Mammary epithelial cell (primary cell): ENCODE measurements at regions of chr15 and their contacts with region 1.

Region 1: DNA sequence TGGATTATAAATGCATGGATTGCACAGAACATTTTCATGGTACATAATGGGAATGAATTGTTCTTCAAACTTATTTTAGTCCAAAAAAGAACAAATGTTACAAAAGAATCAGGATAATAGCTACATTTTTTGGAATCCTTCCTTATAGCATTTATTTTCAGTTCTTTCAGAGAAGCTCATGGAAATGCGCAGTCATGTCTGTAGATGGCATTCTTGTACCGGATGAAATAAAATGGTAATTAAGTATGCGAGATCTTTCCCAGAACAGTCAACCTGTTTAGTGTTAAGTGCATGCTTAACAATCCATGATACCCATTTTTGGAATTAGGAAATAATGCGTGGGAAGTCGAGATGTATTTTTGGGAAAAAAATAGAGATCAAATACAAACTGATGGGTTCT is 38.2 kb upstream of the GOLGA8B start:
- DNase-seq: peak; percentile 20
- H3K4me3 ChIP-seq: no peak overlapping the region
- H3K27ac ChIP-seq: no peak overlapping the region
- H3K4me1 ChIP-seq: no peaks in the 10 kb centered on the region
- H3K27me3 ChIP-seq: no peaks in the 10 kb centered on the region
- CTCF ChIP-seq: peak; percentile 40 to 58

Region 2: GRCh38 chr15:34271493-34271892 is 350.2 kb before region 1 on chr15:
- CTCF ChIA-PET with region 1: no interaction called
- dilution Hi-C with region 1: no loop called
- in situ Hi-C with region 1: no loop called
- intact Hi-C with region 1: no loop called
- DNase-seq: peak; percentile 90
- H3K4me3 ChIP-seq: no peak overlapping the region
- H3K27ac ChIP-seq: no peak overlapping the region
- H3K4me1 ChIP-seq: peaks cover 3% of the 10 kb centered on the region
- H3K27me3 ChIP-seq: no peaks in the 10 kb centered on the region
- CTCF ChIP-seq: no peak

Region 3: GRCh38 chr15:34708422-34708821 is 86.7 kb after region 1 on chr15:
- CTCF ChIA-PET with region 1: interaction called, 12 read pairs
- dilution Hi-C with region 1: no loop called
- in situ Hi-C with region 1: no loop called
- intact Hi-C with region 1: loop called (anchors 5 kb)
- DNase-seq: peak; percentile 42
- H3K4me3 ChIP-seq: no peak overlapping the region
- H3K27ac ChIP-seq: no peak overlapping the region
- H3K4me1 ChIP-seq: no peaks in the 10 kb centered on the region
- H3K27me3 ChIP-seq: no peaks in the 10 kb centered on the region
- CTCF ChIP-seq: peak; percentile 94 to 95

Region 4: DNA sequence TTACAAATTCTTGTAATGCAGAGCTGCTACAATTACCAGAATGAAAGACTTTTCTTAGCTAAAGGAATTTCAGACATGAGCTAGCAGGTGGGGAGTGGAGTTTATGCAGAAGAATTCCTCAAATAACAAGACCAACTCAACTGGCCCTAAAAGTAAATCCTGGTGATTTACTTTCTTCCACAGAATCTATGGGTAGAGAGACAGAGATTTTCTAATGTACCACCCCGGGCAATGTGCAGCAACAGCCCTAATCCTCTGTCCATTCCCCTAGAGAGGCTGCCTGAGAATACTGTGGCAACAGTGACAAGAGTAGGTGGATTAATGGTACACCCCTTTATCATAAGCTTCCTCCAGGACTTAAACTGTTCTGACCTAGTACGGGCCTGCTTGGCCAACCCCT is 292.6 kb after region 1 on chr15:
- CTCF ChIA-PET with region 1: no interaction called
- dilution Hi-C with region 1: no loop called
- in situ Hi-C with region 1: loop called (anchors 10 kb)
- intact Hi-C with region 1: no loop called
- DNase-seq: no peak
- H3K4me3 ChIP-seq: no peak overlapping the region
- H3K27ac ChIP-seq: no peak overlapping the region
- H3K4me1 ChIP-seq: no peaks in the 10 kb centered on the region
- H3K27me3 ChIP-seq: no peaks in the 10 kb centered on the region
- CTCF ChIP-seq: no peak

Region 5: GRCh38 chr15:34969340-34970097 is 347.8 kb after region 1 on chr15 and contains the start of gene AQR:
- CTCF ChIA-PET with region 1: interaction called, 3 read pairs
- dilution Hi-C with region 1: no loop called
- in situ Hi-C with region 1: no loop called
- intact Hi-C with region 1: loop called (anchors 2 kb)
- DNase-seq: peak; percentile 97
- H3K4me3 ChIP-seq: peak within 1 kb of the TSS; percentile 86 to 95 (median 87)
- H3K27ac ChIP-seq: peak within 1 kb of the TSS; percentile 71
- H3K4me1 ChIP-seq: peaks cover 4% of the 10 kb centered on the region
- H3K27me3 ChIP-seq: no peaks in the 10 kb centered on the region
- CTCF ChIP-seq: peak; percentile 58 to 82
- total RNA-seq, gene AQR: 24.8 to 30.0 TPM